Endothelial cell of umbilical vein (primary cell): ENCODE measurements at regions of chr2 and their contacts with region 1.

Region 1: DNA sequence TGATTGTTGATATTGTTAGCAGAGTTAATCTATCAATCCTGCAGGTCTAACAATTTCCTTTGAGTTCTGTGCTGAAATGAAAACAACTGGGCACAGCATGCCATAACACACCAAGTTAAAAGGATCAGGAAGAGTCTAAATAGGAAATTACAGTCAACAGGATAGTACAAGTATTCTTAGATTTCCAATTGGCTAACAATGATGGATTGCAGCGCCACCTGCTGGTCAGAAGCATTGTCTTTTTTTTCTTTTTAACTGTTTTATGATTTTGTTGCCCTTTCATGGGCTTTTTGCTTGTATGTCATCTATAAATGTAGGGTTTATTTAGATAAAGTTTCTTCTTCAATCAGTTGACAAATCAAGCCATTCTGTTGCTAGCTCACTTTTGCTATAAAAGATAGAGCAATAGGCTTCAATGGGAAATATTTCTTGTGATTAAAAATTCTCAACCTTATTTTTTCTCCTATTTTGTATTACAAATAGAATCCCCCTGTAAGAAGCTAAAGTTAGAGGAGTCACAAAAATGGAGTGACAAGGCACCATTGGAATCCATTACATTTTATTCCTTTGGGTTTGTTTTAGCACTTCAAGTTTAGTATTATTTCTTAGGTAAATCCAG is 40.8 kb upstream of the RPRM start:
- DNase-seq: peak; percentile 48
- H3K4me3 ChIP-seq: no peak overlapping the region
- H3K27ac ChIP-seq: no peak overlapping the region
- H3K4me1 ChIP-seq: no peaks in the 10 kb centered on the region
- H3K27me3 ChIP-seq: no peaks in the 10 kb centered on the region
- CTCF ChIP-seq: peak; percentile 49 to 58
- POLR2A ChIP-seq: no peak

Region 2: GRCh38 chr2:152740743-152741328 is 778.5 kb before region 1 on chr2:
- CTCF ChIA-PET with region 1: no interaction called
- POLR2A ChIA-PET with region 1: no interaction called
- dilution Hi-C with region 1: no loop called
- intact Hi-C with region 1: loop called (anchors 1 kb)
- DNase-seq: peak; percentile 78
- H3K4me3 ChIP-seq: no peak overlapping the region
- H3K27ac ChIP-seq: no peak overlapping the region
- H3K4me1 ChIP-seq: peaks cover 5% of the 10 kb centered on the region
- H3K27me3 ChIP-seq: no peaks in the 10 kb centered on the region
- CTCF ChIP-seq: peak; percentile 52
- POLR2A ChIP-seq: no peak

Region 3: DNA sequence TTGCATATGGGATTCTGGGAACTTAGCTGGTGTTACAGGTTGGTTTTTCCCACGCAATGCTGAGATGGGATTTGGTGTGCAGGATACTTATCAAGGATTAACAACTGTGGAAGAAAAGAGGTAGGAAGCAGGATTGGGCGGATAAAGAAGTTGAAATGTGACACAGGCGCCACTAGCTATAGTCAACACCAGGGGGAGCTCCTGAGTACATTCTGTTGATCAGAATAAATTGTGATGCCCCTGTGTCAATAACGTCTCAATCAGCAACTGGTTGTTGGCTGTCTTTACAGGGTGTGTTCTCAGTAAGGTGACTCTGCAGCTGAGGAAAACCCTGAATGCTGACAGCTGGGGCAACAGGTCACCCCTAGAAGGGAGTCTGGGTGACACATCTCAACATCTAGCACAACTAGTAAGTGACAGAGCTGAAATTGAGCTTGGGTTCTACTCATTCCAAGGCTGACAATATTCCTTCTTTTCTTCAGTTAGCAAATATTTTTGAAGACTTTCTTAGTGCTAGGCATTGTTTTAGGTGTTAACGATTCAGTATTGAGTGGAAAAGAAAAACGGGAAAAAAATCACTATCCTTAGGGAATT is 657.9 kb before region 1 on chr2:
- CTCF ChIA-PET with region 1: no interaction called
- POLR2A ChIA-PET with region 1: no interaction called
- dilution Hi-C with region 1: no loop called
- intact Hi-C with region 1: loop called (anchors 1 kb)
- DNase-seq: peak; percentile 30
- H3K4me3 ChIP-seq: no peak overlapping the region
- H3K27ac ChIP-seq: no peak overlapping the region
- H3K4me1 ChIP-seq: no peaks in the 10 kb centered on the region
- H3K27me3 ChIP-seq: no peaks in the 10 kb centered on the region
- CTCF ChIP-seq: peak; percentile 55 to 72
- POLR2A ChIP-seq: no peak

Region 4: DNA sequence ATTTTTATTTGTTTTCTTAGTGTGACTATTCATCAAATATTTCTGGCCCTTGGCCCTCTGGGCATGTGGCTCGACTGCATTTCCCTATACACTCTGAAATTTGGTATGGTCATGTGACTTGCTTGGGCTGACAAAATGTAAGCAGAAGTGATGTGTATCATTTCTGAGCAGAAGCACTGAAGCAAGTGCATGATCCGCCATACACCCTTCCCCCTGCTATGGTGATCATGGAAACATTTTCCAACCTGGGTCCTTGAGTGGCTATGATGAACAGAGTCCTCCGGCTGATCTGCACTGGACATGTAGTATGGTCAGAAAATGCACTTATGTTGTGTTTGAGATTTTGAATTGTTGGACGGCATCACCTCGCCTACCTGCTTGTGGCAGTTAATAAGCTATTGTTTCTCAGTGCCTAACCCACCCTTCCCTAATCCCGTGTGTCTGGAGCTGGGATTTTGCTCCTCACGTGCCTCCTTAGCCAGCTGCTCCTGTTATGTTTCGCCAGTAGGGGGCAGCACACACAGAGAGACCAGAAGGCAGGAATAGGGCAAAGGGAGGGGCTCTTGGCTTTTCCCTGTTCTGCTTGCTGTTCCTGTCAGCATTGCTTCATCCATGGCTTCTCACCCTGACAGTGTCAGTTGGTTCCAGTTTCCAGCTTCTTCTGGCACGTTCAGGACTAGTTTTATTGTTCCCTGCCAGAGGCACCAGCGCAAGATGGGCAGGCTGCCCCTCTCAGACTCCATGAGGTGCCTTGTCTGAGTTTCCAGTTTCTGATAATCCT is 593.6 kb before region 1 on chr2:
- CTCF ChIA-PET with region 1: no interaction called
- POLR2A ChIA-PET with region 1: no interaction called
- dilution Hi-C with region 1: no loop called
- intact Hi-C with region 1: loop called (anchors 1 kb)
- DNase-seq: peak; percentile 6
- H3K4me3 ChIP-seq: no peak overlapping the region
- H3K27ac ChIP-seq: no peak overlapping the region
- H3K4me1 ChIP-seq: no peaks in the 10 kb centered on the region
- H3K27me3 ChIP-seq: no peaks in the 10 kb centered on the region
- CTCF ChIP-seq: peak; percentile 51 to 53
- POLR2A ChIP-seq: no peak